CD4-positive, alpha-beta T cell (primary cell): ENCODE measurements at regions of chr19 and their contacts with region 1.

Region 1: GRCh38 chr19:4139614-4140236 is 13.7 kb upstream of the CREB3L3 start:
- DNase-seq: peak; percentile 77 to 95 (median 88)
- ATAC-seq: peak; percentile 93
- H3K4me3 ChIP-seq: no peak overlapping the region
- H3K4me3 Mint-ChIP-seq: no peak overlapping the region
- H3K27ac ChIP-seq: no peak overlapping the region
- H3K27ac Mint-ChIP-seq: no peak overlapping the region
- H3K4me1 ChIP-seq: peaks cover 15% of the 10 kb centered on the region
- H3K4me1 Mint-ChIP-seq: peaks cover 11% of the 10 kb centered on the region
- H3K27me3 ChIP-seq: peaks cover 0 to 3% of the 10 kb centered on the region in 2 experiments
- H3K27me3 Mint-ChIP-seq: peaks cover 7% of the 10 kb centered on the region
- CTCF ChIP-seq: peak; percentile 74

Region 2: DNA sequence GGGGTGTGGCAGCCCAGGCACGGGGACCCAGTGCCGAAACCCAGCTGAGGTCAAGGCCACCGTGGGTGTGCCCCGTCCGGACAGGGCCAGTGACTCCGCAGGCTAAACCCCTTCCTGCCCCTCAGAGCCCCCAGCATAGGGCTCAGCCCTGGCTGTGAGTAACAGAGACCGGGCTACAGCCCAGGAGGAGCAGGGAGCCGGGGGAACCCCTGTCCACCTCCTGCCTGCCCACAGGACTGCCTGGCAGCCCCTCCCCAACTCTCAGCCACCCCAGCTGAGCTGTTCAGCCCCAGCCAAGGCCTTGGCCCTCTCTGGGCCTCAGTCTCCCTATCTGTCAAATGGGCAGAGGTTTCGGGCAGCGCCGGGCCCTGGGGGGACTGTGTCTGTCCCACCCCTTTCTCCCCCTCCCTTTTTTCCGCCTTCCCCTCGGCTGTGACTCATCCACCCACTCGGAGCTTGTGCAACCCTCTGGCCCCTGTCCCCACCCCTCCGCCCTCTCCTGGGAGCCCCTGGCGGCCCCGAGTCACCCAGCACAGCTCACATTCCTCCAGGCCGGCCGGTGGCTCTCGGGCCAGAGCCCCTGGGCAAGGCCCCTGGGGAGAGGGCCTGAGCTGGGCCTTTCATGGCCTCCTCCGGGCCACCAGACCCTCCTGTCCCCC is 81.6 kb before region 1 on chr19:
- CTCF ChIA-PET with region 1: interaction called, 10 read pairs
- POLR2A ChIA-PET with region 1: no interaction called
- intact Hi-C with region 1: no loop called
- DNase-seq: peak in 8 of 14 experiments; percentile 16 to 78 (median 34)
- ATAC-seq: peak; percentile 13
- H3K4me3 ChIP-seq: no peak overlapping the region
- H3K4me3 Mint-ChIP-seq: no peak overlapping the region
- H3K27ac ChIP-seq: peak overlapping the region; percentile 64 to 86
- H3K27ac Mint-ChIP-seq: peak overlapping the region; percentile 67
- H3K4me1 ChIP-seq: peaks cover 69% of the 10 kb centered on the region
- H3K4me1 Mint-ChIP-seq: peaks cover 23% of the 10 kb centered on the region
- H3K27me3 ChIP-seq: no peaks in the 10 kb centered on the region
- H3K27me3 Mint-ChIP-seq: no peaks in the 10 kb centered on the region
- CTCF ChIP-seq: no peak

Region 3: DNA sequence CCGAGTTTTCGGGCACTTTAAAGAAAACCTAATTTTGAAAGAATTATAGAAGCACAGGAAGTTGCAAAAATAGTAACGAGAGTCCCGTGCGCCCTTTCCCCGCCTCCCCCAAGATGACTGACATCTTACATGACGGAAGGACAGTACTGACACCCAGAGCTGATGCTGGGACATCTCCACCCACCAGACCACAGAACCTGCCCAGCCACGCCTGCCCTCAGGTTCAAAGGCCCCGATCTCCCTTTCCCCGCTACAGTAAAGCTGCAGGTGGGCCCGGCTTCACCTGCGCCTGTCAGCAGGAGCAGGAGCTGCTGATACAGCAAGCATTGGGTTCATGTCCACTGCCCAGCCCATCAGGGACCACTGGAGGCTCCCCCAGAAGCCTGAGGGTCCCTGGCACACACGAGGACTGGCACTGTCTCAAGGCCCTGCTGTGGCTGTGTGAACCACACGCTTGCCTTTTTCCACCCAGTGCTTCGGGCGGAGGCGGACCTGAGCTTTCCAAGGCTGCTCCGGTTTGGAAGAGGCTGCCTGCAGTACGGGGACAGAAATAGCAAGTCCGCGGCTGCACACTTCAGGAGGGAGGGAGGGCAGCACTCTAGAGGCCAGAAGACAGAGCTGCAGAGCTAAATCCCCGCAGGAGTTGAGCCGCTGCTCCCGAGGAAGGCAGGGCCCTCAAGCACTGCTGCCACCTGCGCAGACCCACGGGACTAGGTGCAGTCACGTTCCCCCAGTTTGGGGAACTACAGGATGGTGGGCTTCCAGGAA is 24.5 kb before region 1 on chr19:
- CTCF ChIA-PET with region 1: interaction called, 17 read pairs
- POLR2A ChIA-PET with region 1: interaction called, 3 read pairs
- intact Hi-C with region 1: no loop called
- DNase-seq: peak; percentile 45 to 89 (median 66)
- ATAC-seq: peak; percentile 100
- H3K4me3 ChIP-seq: peak overlapping the region; percentile 9
- H3K4me3 Mint-ChIP-seq: peak overlapping the region; percentile 75
- H3K27ac ChIP-seq: peak overlapping the region; percentile 55 to 58
- H3K27ac Mint-ChIP-seq: peak overlapping the region; percentile 87
- H3K4me1 ChIP-seq: peaks cover 46% of the 10 kb centered on the region
- H3K4me1 Mint-ChIP-seq: peaks cover 25% of the 10 kb centered on the region
- H3K27me3 ChIP-seq: no peaks in the 10 kb centered on the region
- H3K27me3 Mint-ChIP-seq: no peaks in the 10 kb centered on the region
- CTCF ChIP-seq: no peak

Region 4: DNA sequence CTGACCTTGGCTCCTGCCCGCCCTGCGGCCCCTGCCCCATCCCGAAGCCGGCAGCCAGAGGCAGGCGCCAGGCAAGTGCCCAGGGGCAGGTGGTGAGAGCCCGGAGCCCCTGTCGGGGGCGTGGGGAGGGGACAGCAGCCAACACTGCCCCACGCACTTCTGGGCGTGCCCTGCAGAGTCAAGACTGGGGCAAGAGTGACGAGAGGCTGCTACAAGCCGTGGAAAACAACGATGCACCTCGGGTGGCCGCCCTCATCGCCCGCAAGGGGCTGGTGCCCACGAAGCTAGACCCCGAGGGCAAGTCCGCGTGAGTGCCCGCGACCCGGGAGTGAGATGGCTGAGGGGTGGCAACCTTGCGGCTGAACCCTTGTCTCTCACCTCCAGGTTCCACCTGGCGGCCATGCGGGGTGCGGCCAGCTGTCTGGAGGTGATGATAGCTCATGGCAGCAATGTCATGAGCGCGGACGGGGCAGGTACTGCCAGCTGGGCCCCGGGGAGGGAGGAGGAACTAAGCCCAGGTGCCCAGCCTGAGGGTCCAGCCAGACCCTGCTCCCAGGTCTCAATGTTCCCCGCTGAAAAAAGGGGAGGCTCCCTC is 60.1 kb after region 1 on chr19:
- CTCF ChIA-PET with region 1: interaction called, 8 read pairs
- POLR2A ChIA-PET with region 1: no interaction called
- intact Hi-C with region 1: loop called in 1 of 2 experiments (anchors 5 kb)
- DNase-seq: no peak
- ATAC-seq: no peak
- H3K4me3 ChIP-seq: no peak overlapping the region
- H3K4me3 Mint-ChIP-seq: no peak overlapping the region
- H3K27ac ChIP-seq: no peak overlapping the region
- H3K27ac Mint-ChIP-seq: no peak overlapping the region
- H3K4me1 ChIP-seq: peaks cover 8% of the 10 kb centered on the region
- H3K4me1 Mint-ChIP-seq: peaks cover 10% of the 10 kb centered on the region
- H3K27me3 ChIP-seq: peaks cover 31 to 33% of the 10 kb centered on the region in 2 experiments
- H3K27me3 Mint-ChIP-seq: peaks cover 61% of the 10 kb centered on the region
- CTCF ChIP-seq: no peak